ENCODE measurements at regions of chr4 and their contacts with region 1.

Region 1: GRCh38 chr4:174764105-174764729 is 64.8 kb downstream of the GLRA3 start:
- DNase-seq: no peak
- H3K4me3 ChIP-seq: no peak overlapping the region
- H3K27ac ChIP-seq: no peak overlapping the region
- H3K27me3 ChIP-seq: peaks cover 0 to 9% (median 0%) of the 10 kb centered on the region in 45 donors
- CTCF ChIP-seq: peak; percentile 42 to 77 (median 63)

Region 2: GRCh38 chr4:175405961-175406360 is 641.7 kb after region 1 on chr4:
- intact Hi-C with region 1: no loop called
- DNase-seq: no peak
- H3K4me3 ChIP-seq: no peak overlapping the region
- H3K27ac ChIP-seq: no peak overlapping the region
- H3K27me3 ChIP-seq: peaks cover 0 to 5% (median 0%) of the 10 kb centered on the region in 45 donors
- CTCF ChIP-seq: no peak

Region 3: GRCh38 chr4:175522607-175523006 is 758.4 kb after region 1 on chr4:
- intact Hi-C with region 1: loop called in 1 of 2 experiments (anchors 10 kb)
- DNase-seq: no peak
- H3K4me3 ChIP-seq: no peak overlapping the region
- H3K27ac ChIP-seq: no peak overlapping the region
- H3K27me3 ChIP-seq: no peaks in the 10 kb centered on the region
- CTCF ChIP-seq: no peak

Region 4: GRCh38 chr4:175542786-175543185 is 778.6 kb after region 1 on chr4:
- intact Hi-C with region 1: loop called in 1 of 2 experiments (anchors 10 kb)
- DNase-seq: no peak
- H3K4me3 ChIP-seq: no peak overlapping the region
- H3K27ac ChIP-seq: no peak overlapping the region
- H3K27me3 ChIP-seq: no peaks in the 10 kb centered on the region
- CTCF ChIP-seq: no peak